Thyroid gland (tissue), 4 donors: ENCODE measurements at regions of chr1 and their contacts with region 1.

Region 1: GRCh38 chr1:245045087-245045881 is 109.5 kb upstream of the KIF26B start:
- DNase-seq: peak in 1 of 2 donors; percentile 37
- H3K4me3 ChIP-seq: no peak overlapping the region
- H3K27ac ChIP-seq: peak overlapping the region in 1 of 3 donors; percentile 7
- H3K4me1 ChIP-seq: peaks cover 0 to 8% of the 10 kb centered on the region in 2 donors
- H3K27me3 ChIP-seq: no peaks in the 10 kb centered on the region
- CTCF ChIP-seq: no peak
- POLR2A ChIP-seq: no peak

Region 2: GRCh38 chr1:244599937-244600350 is 445.3 kb before region 1 on chr1:
- intact Hi-C with region 1: loop called (anchors 5 kb)
- DNase-seq: no peak
- H3K4me3 ChIP-seq: no peak overlapping the region
- H3K27ac ChIP-seq: no peak overlapping the region
- H3K4me1 ChIP-seq: no peaks in the 10 kb centered on the region
- H3K27me3 ChIP-seq: no peaks in the 10 kb centered on the region
- CTCF ChIP-seq: no peak
- POLR2A ChIP-seq: no peak

Region 3: DNA sequence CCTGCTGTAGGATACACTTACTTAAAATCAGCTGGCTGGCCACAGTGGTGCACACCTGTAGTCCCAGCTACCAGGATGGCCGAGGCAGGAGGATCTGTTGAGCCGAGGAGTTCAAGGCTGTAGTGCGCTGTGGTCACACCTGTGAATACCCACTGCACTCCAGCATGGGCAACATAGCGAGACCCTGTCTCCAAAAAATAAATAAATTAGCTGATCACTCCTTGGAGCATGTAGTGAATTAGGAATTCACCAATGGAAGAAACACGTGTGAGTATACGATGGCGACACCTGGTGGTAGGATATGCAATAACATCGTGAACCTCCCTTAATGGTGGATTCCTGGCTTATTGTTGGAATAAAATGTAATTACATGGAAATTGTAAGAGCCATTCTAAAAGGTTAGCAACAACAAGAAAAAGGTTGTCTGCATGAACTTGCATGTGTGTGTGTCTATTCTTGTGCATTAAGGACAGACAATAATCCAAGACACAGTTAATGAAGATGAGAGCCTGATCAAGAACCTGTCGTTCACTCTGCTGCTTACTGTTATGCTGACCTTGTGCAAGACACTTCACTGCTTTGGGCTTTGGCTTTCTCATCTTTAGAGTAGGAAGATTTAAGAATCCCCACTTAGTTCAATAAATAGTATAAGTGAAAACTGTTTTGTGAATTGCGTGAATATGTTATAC is 248.4 kb before region 1 on chr1:
- intact Hi-C with region 1: loop called (anchors 10 kb)
- DNase-seq: peak; percentile 61 to 65
- H3K4me3 ChIP-seq: no peak overlapping the region
- H3K27ac ChIP-seq: no peak overlapping the region
- H3K4me1 ChIP-seq: no peaks in the 10 kb centered on the region
- H3K27me3 ChIP-seq: no peaks in the 10 kb centered on the region
- CTCF ChIP-seq: peak; percentile 86 to 94 (median 90)
- POLR2A ChIP-seq: no peak

Region 4: DNA sequence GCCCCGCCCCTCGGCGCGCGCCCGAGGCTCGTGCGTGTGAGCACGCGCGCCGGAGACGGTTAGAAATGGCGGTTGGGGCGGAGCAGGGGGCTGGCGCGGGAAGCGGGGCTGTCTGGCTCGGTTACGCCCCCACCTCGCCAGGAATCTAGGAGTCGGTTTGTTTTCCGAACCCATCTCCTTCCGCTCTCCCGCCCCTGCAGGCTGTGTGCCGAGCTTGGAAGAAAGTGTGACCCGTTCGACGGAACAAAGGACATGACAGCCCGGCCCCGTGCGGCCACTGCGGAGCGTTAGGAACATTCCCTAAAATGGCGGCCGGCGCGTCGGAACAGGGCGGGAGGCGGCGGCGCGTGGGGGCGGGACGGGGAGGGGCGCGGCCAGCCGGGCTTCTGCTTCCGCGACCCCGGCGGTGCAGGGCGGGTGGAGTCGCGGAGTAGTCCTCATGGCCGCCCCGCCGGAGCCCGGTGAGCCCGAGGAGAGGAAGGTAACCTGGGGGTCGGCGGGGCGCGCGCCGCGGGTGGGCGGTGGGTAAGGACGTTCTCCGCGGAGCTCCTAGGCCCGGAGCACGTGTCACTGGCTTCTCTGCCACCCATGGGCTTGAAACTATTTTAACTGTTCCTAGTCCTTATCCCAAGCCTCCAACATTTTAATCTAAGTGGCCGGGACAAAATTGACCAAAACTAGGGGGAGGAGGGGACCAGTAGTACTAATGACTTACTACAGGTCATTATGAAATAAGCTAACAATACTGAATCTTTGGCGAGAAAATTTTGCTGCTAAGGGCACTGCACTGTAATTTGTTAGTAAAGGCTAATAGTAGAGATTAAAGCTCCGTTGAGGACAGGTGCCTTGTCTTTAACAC is 209.8 kb before region 1 on chr1 and contains the start of gene COX20:
- intact Hi-C with region 1: loop called (anchors 10 kb)
- DNase-seq: peak; percentile 90 to 91
- H3K4me3 ChIP-seq: peak within 1 kb of the TSS; percentile 55 to 79 (median 60)
- H3K27ac ChIP-seq: peak within 1 kb of the TSS; percentile 99
- H3K4me1 ChIP-seq: peaks cover 17 to 25% of the 10 kb centered on the region in 2 donors
- H3K27me3 ChIP-seq: no peaks in the 10 kb centered on the region
- CTCF ChIP-seq: no peak
- POLR2A ChIP-seq: peak; percentile 42 to 70
- total RNA-seq, gene COX20: 68.8 to 83.6 (median 73.5) TPM

Region 5: GRCh38 chr1:244864253-244865027 is 180.8 kb before region 1 on chr1 and contains the start of gene HNRNPU:
- intact Hi-C with region 1: loop called (anchors 5 kb)
- DNase-seq: peak; percentile 97
- H3K4me3 ChIP-seq: peak within 1 kb of the TSS; percentile 62 to 99 (median 96)
- H3K27ac ChIP-seq: peak within 1 kb of the TSS; percentile 98 to 100 (median 100)
- H3K4me1 ChIP-seq: peaks cover 22 to 31% of the 10 kb centered on the region in 2 donors
- H3K27me3 ChIP-seq: no peaks in the 10 kb centered on the region
- CTCF ChIP-seq: peak in 3 of 6 experiments; percentile 25 to 46 (median 30)
- POLR2A ChIP-seq: peak; percentile 86 to 100
- total RNA-seq, gene HNRNPU: 305 to 433 (median 344) TPM

Region 6: DNA sequence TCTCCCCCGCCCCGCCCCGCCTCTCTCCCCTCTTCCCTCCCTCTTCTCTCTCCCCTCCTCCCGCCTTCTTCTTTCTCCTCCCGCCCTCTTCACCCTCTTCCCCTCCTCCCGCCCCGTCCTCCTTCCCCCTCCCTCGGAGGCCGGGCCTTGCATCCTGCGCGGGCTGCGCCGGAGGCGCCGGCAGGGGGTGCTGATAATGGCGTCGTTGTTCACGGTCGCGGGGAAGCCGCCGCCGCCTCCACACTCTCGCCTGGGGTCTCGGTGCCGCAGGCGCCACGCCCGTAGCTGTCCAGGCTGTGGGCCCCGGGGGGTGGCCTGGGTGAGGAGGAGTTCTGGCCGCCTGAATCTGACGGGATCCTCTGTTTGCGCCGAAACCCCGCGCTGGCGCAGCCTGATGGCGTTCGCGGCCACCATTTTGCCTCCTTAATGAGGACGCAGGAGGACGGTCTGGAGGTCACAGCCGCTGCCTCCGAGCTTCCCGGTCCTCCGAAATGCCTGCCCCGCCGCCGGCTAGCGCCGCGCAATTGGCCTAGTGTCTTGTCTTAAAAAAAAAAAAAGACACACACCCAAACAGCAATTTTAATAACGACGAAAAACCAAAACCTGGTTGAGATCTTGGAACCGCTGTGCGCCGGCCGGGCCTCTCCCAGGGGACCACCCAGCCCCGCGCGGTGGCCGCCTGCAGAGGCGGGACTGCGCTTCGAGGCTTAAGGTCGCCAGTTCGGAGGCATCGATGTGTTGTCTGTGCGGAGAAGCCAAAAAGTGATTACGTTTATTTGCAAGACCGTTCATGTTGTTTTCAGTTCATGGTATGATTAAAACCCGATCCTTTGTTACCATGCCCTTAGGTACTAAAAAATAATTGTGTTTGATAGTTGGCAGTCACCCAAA is 74.4 kb before region 1 on chr1:
- intact Hi-C with region 1: loop called (anchors 5 kb)
- DNase-seq: peak; percentile 94 to 96
- H3K4me3 ChIP-seq: peak overlapping the region; percentile 47 to 63 (median 60)
- H3K27ac ChIP-seq: peak overlapping the region; percentile 99 to 100 (median 100)
- H3K4me1 ChIP-seq: peaks cover 4 to 10% of the 10 kb centered on the region in 2 donors
- H3K27me3 ChIP-seq: no peaks in the 10 kb centered on the region
- CTCF ChIP-seq: peak; percentile 18 to 73 (median 60)
- POLR2A ChIP-seq: peak; percentile 35 to 83

Region 7: GRCh38 chr1:245107776-245108645 is 62.7 kb after region 1 on chr1:
- intact Hi-C with region 1: no loop called
- DNase-seq: no peak
- H3K4me3 ChIP-seq: no peak overlapping the region
- H3K27ac ChIP-seq: no peak overlapping the region
- H3K4me1 ChIP-seq: peaks cover 13% of the 10 kb centered on the region in 2 donors
- H3K27me3 ChIP-seq: no peaks in the 10 kb centered on the region
- CTCF ChIP-seq: no peak
- POLR2A ChIP-seq: no peak